BJ (cell line): ENCODE measurements at regions of chr19 and their contacts with region 1.

Region 1: GRCh38 chr19:39792999-39793546 is 14.4 kb downstream of the LEUTX start:
- DNase-seq: peak; percentile 19
- H3K4me3 ChIP-seq: peak overlapping the region; percentile 58
- H3K27me3 ChIP-seq: no peaks in the 10 kb centered on the region; the same call in 1 of the 2 replicates
- CTCF ChIP-seq: peak; percentile 98

Region 2: GRCh38 chr19:39833464-39834286 is 40.6 kb after region 1 on chr19 and contains the start of gene DYRK1B:
- CTCF ChIA-PET with region 1: interaction called, 12 read pairs
- POLR2A ChIA-PET with region 1: no interaction called
- DNase-seq: peak; percentile 76
- H3K4me3 ChIP-seq: peak within 1 kb of the TSS; percentile 90
- H3K27me3 ChIP-seq: no peaks in the 10 kb centered on the region
- CTCF ChIP-seq: no peak
- polyA plus RNA-seq, gene DYRK1B: 6.6 and 8.4 TPM in 2 replicates

Region 3: DNA sequence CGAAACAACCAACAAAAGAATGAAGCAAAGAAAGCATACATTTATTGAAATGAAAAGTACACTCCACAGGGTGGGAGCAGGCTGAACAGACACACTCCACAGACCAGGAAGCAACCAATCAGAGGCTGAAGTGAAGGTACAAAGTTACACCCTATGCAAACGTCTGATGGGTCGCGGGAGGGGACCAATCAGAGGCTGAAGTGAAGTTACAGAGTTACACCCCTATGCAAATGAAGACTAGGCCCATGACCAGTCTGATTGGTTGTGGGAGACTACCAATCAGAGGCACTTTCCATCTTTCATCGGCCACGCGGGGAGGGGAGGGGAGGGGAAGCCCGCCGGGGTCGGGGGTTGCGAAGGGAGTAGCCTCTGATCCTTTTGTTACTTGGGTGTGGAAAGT is 65.5 kb after region 1 on chr19:
- CTCF ChIA-PET with region 1: no interaction called
- POLR2A ChIA-PET with region 1: no interaction called
- DNase-seq: no peak
- H3K4me3 ChIP-seq: no peak overlapping the region
- H3K27me3 ChIP-seq: no peaks in the 10 kb centered on the region
- CTCF ChIP-seq: no peak

Region 4: GRCh38 chr19:39970675-39971379 is 177.8 kb after region 1 on chr19 and contains the start of gene PSMC4:
- CTCF ChIA-PET with region 1: interaction called, 13 read pairs
- POLR2A ChIA-PET with region 1: no interaction called
- DNase-seq: peak; percentile 96
- H3K4me3 ChIP-seq: peak within 1 kb of the TSS; percentile 93
- H3K27me3 ChIP-seq: no peaks in the 10 kb centered on the region
- CTCF ChIP-seq: peak; percentile 80
- polyA plus RNA-seq, gene PSMC4: 71.5 and 105 TPM in 2 replicates